A549 (cell line): ENCODE measurements at regions of chr12 and their contacts with region 1.

Region 1: GRCh38 chr12:95072900-95073697 is at the start of gene NR2C1:
- DNase-seq: peak; percentile 97 to 99
- ATAC-seq: peak; percentile 97 to 98
- H3K4me3 ChIP-seq: peak within 1 kb of the TSS; percentile 85
- H3K27ac ChIP-seq: peak within 1 kb of the TSS; percentile 85 to 93
- H3K4me1 ChIP-seq: peaks cover 10% of the 10 kb centered on the region
- CTCF ChIP-seq: no peak; the same call in 2 of the 3 replicates
- EP300 ChIP-seq: no peak; a peak in 1 of 5 replicates
- POLR2A ChIP-seq: peak; percentile 36
- RAD21 ChIP-seq: no peak; a peak in 1 of 5 replicates
- polyA plus RNA-seq, gene NR2C1: 50.9 and 55.2 TPM in 2 replicates

Region 2: DNA sequence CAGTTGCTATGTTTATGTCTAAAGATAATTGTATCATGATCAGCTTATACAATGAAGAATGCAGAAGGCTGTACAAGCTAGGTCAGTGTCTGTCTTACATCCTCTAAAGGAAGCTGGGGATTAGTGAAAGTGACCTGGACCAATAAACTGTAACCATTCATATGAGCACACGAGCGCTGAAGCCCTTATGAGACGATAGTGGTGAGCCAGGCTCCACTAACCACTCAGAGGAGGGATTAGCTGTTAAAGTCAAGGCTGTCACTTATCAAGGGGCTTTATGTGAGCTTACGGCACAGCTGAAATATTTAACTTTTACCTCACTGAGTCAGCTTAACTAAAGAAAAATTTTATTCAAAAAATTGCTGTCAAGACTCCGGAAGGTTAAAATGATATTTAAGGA is 99.9 kb before region 1 on chr12:
- CTCF ChIA-PET with region 1: no interaction called
- POLR2A ChIA-PET with region 1: no interaction called
- DNase-seq: no peak
- ATAC-seq: no peak
- H3K4me3 ChIP-seq: no peak overlapping the region
- H3K27ac ChIP-seq: no peak overlapping the region
- H3K4me1 ChIP-seq: no peaks in the 10 kb centered on the region
- CTCF ChIP-seq: no peak
- EP300 ChIP-seq: no peak
- POLR2A ChIP-seq: no peak
- RAD21 ChIP-seq: no peak

Region 3: GRCh38 chr12:95083938-95084337 is 10.8 kb after region 1 on chr12:
- CTCF ChIA-PET with region 1: interaction called, 16 read pairs
- POLR2A ChIA-PET with region 1: interaction called, 4 read pairs
- DNase-seq: peak in 1 of 2 experiments; percentile 65
- ATAC-seq: peak; percentile 43 to 85; a peak in 3 of 6 replicates
- H3K4me3 ChIP-seq: no peak overlapping the region
- H3K27ac ChIP-seq: peak overlapping the region in 1 of 2 experiments; percentile 19; a peak in 1 of 6 replicates
- H3K4me1 ChIP-seq: peaks cover 27% of the 10 kb centered on the region
- CTCF ChIP-seq: no peak
- EP300 ChIP-seq: no peak
- POLR2A ChIP-seq: no peak
- RAD21 ChIP-seq: no peak

Region 4: GRCh38 chr12:95096852-95097251 is 23.8 kb after region 1 on chr12:
- CTCF ChIA-PET with region 1: interaction called, 10 read pairs
- POLR2A ChIA-PET with region 1: interaction called, 3 read pairs
- DNase-seq: peak in 1 of 2 experiments; percentile 51
- ATAC-seq: peak in 1 of 2 experiments; percentile 43; a peak in 3 of 6 replicates
- H3K4me3 ChIP-seq: no peak overlapping the region
- H3K27ac ChIP-seq: peak overlapping the region; percentile 45 to 60; a peak in 5 of 6 replicates
- H3K4me1 ChIP-seq: peaks cover 41% of the 10 kb centered on the region
- CTCF ChIP-seq: no peak
- EP300 ChIP-seq: peak; percentile 20 to 29; a peak in 2 of 5 replicates
- POLR2A ChIP-seq: no peak
- RAD21 ChIP-seq: no peak

Region 5: DNA sequence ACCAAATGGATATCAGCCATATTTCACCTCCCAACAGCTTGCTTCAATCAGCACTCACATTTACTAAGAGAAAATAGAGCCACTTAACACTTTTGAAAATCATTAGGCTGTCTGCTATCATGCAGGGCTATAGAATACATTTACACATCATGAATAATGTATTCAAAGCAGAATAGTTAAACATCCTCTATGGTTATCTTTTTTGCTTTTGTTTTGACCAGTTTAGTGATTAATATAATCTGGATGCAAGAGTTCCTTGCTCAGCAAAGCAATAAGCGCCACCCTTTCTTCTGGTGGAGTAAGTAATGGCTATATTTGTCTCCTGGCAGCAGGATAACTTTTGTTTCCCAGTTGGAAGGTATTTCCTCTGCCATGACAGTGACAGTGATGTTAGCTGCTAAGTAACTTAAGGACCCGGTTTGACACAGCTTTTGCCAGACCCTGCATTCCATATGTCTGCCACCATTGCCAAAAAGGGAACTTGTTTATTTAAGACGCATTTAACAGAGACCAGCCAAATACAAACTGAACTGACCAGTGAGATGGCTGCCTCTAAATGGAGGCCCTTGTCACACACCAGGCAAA is 70.6 kb after region 1 on chr12:
- CTCF ChIA-PET with region 1: no interaction called
- POLR2A ChIA-PET with region 1: no interaction called
- DNase-seq: no peak
- ATAC-seq: no peak
- H3K4me3 ChIP-seq: no peak overlapping the region
- H3K27ac ChIP-seq: peak overlapping the region in 1 of 2 experiments; percentile 10; a peak in 1 of 6 replicates
- H3K4me1 ChIP-seq: 0 out of 3 replicates have a peak, but pooled peaks cover 3% of the 10 kb centered on the region
- CTCF ChIP-seq: no peak
- EP300 ChIP-seq: no peak
- POLR2A ChIP-seq: no peak
- RAD21 ChIP-seq: no peak

Region 6: DNA sequence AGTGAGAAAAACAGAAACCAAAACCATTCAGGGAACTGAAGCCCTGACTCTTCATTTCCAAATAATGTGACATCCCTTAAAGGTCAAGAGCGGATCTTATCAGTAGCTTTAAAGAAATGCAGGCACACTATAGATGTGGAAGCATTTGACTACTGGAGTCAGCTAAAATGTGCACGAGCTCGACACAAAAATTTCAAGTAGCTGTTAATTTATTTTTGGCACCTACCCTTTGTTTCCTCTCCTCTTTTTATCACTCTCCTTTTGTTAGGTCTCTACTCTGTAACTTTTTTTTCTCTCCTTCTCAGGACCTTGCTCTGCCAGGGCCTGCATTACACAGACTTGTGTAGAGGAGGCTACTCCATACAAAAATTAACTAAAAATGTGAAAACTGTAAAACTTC is 85.8 kb after region 1 on chr12:
- CTCF ChIA-PET with region 1: no interaction called
- POLR2A ChIA-PET with region 1: no interaction called
- DNase-seq: no peak
- ATAC-seq: no peak
- H3K4me3 ChIP-seq: no peak overlapping the region
- H3K27ac ChIP-seq: peak overlapping the region in 1 of 2 experiments; percentile 49; a peak in 2 of 6 replicates
- H3K4me1 ChIP-seq: peaks cover 18% of the 10 kb centered on the region
- CTCF ChIP-seq: no peak
- EP300 ChIP-seq: no peak
- POLR2A ChIP-seq: no peak
- RAD21 ChIP-seq: no peak